Aorta (tissue), 5 donors: ENCODE measurements at regions of chr2 and their contacts with region 1.

Region 1: DNA sequence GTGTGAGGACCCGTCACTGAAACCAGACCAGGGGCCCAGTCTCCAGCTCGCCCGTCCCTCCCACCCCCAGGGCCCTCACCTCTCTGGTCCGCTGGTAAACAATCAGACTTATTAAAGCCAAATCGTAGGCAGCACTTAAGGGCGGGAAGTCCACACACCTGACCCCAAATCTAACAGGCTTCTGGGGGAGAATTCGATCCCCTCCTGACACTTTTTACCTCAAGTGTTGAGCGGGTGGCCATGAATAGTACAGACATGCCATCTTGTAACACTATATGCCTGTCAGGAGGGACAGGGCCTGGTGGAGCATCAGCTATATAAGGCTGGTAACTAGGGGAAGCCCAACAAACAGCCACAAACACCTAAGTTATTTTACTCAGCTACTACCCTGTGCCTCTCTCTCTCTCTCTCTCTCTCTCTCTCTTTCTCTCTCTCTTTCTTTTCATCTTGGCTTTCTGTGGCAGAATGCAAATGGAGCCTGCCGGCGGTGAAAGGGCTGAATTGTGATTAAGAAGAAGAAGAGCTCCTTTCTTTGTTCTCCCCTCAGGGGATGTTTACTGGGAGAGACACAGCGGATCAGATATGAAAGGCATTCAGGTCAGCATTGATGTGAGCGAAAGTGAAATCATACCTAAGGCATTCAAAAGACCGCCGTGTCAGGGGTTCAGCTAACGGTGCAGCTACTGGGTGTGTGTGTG is 9.5 kb downstream of the ZEB2 start:
- DNase-seq: no peak
- ATAC-seq: no peak
- H3K4me3 ChIP-seq: peak overlapping the region in 1 of 2 donors; percentile 26
- H3K27ac ChIP-seq: peak overlapping the region; percentile 77 to 92
- H3K4me1 ChIP-seq: peaks cover 3 to 5% of the 10 kb centered on the region in 2 donors
- H3K27me3 ChIP-seq: no peaks in the 10 kb centered on the region

Region 2: GRCh38 chr2:143779021-143779420 is 731.4 kb before region 1 on chr2:
- intact Hi-C with region 1: no loop called
- DNase-seq: no peak
- ATAC-seq: no peak
- H3K4me3 ChIP-seq: no peak overlapping the region
- H3K27ac ChIP-seq: no peak overlapping the region
- H3K4me1 ChIP-seq: peaks cover 0 to 2% of the 10 kb centered on the region in 2 donors
- H3K27me3 ChIP-seq: no peaks in the 10 kb centered on the region

Region 3: GRCh38 chr2:144430722-144431391 is 79.6 kb before region 1 on chr2:
- intact Hi-C with region 1: loop called in 1 of 2 experiments (anchors 5 kb)
- DNase-seq: peak in 1 of 2 donors; percentile 53
- ATAC-seq: peak; percentile 88
- H3K4me3 ChIP-seq: peak overlapping the region; percentile 18 to 90
- H3K27ac ChIP-seq: peak overlapping the region; percentile 71 to 97
- H3K4me1 ChIP-seq: peaks cover 4% of the 10 kb centered on the region in 2 donors
- H3K27me3 ChIP-seq: no peaks in the 10 kb centered on the region

Region 4: GRCh38 chr2:144449028-144449406 is 61.4 kb before region 1 on chr2:
- intact Hi-C with region 1: loop called (anchors 5 kb)
- DNase-seq: peak; percentile 67 to 74
- ATAC-seq: peak; percentile 69
- H3K4me3 ChIP-seq: peak overlapping the region; percentile 1 to 41
- H3K27ac ChIP-seq: peak overlapping the region; percentile 19 to 87
- H3K4me1 ChIP-seq: peaks cover 0 to 6% of the 10 kb centered on the region in 2 donors
- H3K27me3 ChIP-seq: no peaks in the 10 kb centered on the region

Region 5: GRCh38 chr2:144770616-144771230 is 260.3 kb after region 1 on chr2:
- intact Hi-C with region 1: no loop called
- DNase-seq: no peak
- ATAC-seq: no peak
- H3K4me3 ChIP-seq: no peak overlapping the region
- H3K27ac ChIP-seq: no peak overlapping the region
- H3K4me1 ChIP-seq: no peaks in the 10 kb centered on the region
- H3K27me3 ChIP-seq: no peaks in the 10 kb centered on the region

Region 6: DNA sequence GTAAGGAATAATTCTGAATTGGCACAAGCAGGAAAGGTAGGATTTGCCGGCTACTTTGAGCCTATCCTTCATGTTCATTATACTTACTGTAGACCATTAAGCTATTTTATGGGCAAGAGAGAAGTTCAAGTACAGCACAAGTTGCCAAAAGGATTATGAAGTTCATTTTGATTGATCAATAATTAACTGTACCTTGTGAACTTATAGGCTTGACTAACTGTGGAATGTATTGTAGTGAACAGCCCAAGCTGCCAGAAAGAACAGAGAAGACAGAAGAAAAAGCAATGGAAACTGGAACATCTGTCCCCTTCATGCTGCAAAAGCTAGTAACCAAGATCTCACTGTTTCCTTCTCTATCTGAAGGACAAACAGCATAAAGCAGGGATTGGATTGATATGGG is 819.5 kb after region 1 on chr2:
- intact Hi-C with region 1: no loop called
- DNase-seq: no peak
- ATAC-seq: no peak
- H3K4me3 ChIP-seq: no peak overlapping the region
- H3K27ac ChIP-seq: no peak overlapping the region
- H3K4me1 ChIP-seq: no peaks in the 10 kb centered on the region
- H3K27me3 ChIP-seq: no peaks in the 10 kb centered on the region